Dendritic cell treated with granulocyte-macrophage colony-stimulating factor and Interleukin-4, amounts not matched to agents 40 ng/mL and 50 ng/mL, for 4 days (primary cell): ENCODE measurements at regions of chr13 and their contacts with region 1.

Region 1: DNA sequence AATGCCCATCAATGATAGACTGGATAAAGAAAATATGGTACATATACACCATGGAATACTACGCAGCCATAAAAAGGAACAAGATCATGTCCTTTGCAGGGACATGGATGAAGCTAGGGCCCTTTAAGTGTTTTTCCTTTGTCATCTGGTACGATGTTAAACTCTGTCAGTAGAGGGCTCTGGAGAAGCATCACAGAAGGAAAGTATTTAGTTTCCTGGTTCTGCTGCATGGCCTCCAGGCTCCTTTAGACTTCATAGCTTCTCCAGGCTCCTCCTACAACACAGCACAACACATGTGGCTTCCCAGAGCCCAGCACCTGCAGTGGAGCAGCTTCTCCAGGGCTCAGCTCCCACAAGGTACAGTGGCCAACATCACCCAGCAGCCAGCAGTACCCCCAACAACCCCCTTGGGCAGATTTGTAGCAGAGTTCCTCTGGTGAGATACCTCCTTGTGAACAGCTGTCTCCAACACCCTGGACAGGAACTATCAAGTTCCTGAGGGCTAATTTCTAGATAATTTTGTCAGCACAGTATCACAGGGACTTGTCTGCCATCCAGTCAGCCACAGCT is 63.4 kb downstream of the KCTD12 start:
- H3K4me3 Mint-ChIP-seq: peak overlapping the region; percentile 44
- H3K27ac Mint-ChIP-seq: peak overlapping the region; percentile 81
- H3K4me1 Mint-ChIP-seq: peaks cover 45% of the 10 kb centered on the region
- H3K27me3 Mint-ChIP-seq: no peaks in the 10 kb centered on the region

Region 2: DNA sequence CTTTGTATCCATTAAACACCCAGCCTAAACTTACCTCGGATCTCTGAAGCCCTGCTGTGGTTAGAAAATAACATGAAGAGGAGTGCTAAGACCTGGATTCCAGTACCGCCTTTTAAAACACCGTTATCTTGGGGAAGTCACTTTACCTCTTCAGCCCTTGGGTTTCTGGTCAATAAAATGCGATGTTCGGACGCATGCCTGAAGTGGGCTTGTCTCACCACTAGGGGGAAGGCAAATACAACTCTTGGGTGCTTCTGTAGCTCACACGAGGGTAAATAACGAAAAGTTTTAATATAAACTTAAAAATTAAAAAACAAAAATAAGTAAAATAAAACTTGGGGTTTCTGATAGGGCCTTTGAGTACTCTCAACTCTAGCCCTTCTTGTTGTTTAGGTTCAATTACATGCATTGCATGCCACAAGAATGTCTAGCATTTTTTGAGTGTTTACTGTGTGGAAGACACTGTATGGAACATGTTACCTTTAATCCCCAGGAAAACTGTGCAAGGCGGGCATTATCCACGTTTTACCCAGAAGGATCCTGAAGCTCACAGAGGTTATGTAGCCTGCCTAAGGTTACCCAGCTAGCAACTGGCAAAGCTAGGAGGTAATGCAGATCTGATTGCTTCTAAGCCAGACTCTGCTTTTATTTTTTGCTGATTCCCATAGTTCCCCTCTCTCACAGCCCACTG is 946.3 kb before region 1 on chr13:
- intact Hi-C with region 1: loop called (anchors 10 kb)
- H3K4me3 Mint-ChIP-seq: no peak overlapping the region
- H3K27ac Mint-ChIP-seq: no peak overlapping the region
- H3K4me1 Mint-ChIP-seq: peaks cover 41% of the 10 kb centered on the region
- H3K27me3 Mint-ChIP-seq: peaks cover 14% of the 10 kb centered on the region

Region 3: GRCh38 chr13:76667551-76667950 is 155.2 kb before region 1 on chr13:
- intact Hi-C with region 1: loop called (anchors 10 kb)
- H3K4me3 Mint-ChIP-seq: no peak overlapping the region
- H3K27ac Mint-ChIP-seq: no peak overlapping the region
- H3K4me1 Mint-ChIP-seq: peaks cover 40% of the 10 kb centered on the region
- H3K27me3 Mint-ChIP-seq: no peaks in the 10 kb centered on the region

Region 4: GRCh38 chr13:76886292-76887075 is 63.7 kb after region 1 on chr13 and contains the start of gene KCTD12:
- intact Hi-C with region 1: loop called (anchors 2 kb)
- H3K4me3 Mint-ChIP-seq: peak within 1 kb of the TSS; percentile 93
- H3K27ac Mint-ChIP-seq: peak within 1 kb of the TSS; percentile 97
- H3K4me1 Mint-ChIP-seq: peaks cover 25% of the 10 kb centered on the region
- H3K27me3 Mint-ChIP-seq: peaks cover 4% of the 10 kb centered on the region

Region 5: DNA sequence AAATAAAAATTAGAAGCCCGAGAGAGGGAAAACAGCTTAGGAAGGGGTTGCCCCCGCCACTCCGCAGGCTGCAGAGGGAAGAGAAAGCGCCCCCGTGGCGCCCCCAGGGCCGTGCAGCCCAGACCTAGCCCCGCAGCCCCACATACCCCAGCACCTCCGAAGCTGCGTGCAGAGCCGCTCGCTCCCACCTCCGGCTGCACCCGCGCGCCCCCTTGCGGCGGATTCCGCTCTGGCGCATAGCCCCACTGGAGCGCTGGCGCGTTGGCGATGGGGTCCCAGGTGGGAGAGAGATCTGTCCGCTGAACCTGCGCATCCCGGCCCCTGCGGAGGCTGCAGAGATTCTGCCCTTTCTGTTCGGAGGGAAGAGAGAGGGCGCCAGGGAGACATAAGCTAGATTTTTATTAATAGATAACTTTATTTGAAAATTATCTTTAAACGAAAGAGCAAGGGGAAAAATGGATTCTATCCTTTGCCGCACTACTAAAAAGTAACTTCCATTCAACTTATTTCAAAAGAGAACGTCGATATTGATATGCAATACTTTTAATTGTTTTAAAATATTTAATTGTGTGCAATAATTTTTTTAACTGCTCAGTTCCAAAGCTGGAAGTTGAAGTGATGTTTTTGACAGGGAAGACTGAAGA is 157.4 kb after region 1 on chr13:
- intact Hi-C with region 1: loop called (anchors 10 kb)
- H3K4me3 Mint-ChIP-seq: peak overlapping the region; percentile 40
- H3K27ac Mint-ChIP-seq: no peak overlapping the region
- H3K4me1 Mint-ChIP-seq: peaks cover 5% of the 10 kb centered on the region
- H3K27me3 Mint-ChIP-seq: peaks cover 33% of the 10 kb centered on the region